HEK293T (cell line): ENCODE measurements at regions of chr6 and their contacts with region 1.

Region 1: GRCh38 chr6:72411872-72412708 is 209.8 kb upstream of the KCNQ5 start:
- DNase-seq: peak; percentile 81

Region 2: DNA sequence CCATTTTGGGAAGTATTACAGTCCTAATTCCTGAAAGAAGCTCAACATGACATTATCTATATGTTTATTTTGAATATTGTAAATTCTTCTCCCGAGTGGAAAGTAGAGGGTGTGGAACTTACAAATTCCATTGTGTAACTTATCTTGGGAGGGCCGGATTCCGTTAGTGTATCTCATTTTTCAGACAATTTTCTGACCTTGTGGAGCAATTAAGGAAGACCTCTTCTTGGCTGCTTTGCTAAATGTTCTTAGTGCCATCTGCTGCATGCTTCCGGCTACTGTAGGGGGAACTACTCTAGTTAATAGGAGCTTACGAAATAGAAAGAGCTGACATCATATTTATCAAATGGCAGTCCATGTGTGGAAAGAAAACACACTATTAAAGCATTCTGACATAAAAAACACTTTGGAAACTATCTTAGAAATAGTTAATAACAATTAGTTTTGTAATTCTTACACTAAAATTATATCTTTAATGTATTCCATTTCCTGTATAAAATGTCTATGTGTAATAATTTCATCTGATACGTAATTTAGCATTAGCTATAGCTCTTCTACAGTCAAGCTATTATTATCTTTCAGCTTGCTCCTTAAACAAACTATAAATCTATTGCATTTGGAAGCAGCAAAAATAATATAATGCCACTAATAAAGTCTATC is 168.3 kb after region 1 on chr6:
- CTCF ChIA-PET with region 1: interaction called, 18 read pairs
- POLR2A ChIA-PET with region 1: no interaction called
- DNase-seq: peak; percentile 34